RWPE1 (cell line): ENCODE measurements at regions of chr6 and their contacts with region 1.

Region 1: GRCh38 chr6:26103770-26104456 is 16.7 kb downstream of the HFE start:
- DNase-seq: peak; percentile 80
- H3K27ac ChIP-seq: peak overlapping the region; percentile 89
- CTCF ChIP-seq: 0 out of 2 replicates have a peak, but pooled peaks have one; percentile 24

Region 2: GRCh38 chr6:26031595-26032339 is 72.1 kb before region 1 on chr6:
- CTCF ChIA-PET with region 1: no interaction called
- POLR2A ChIA-PET with region 1: interaction called, 10 read pairs
- DNase-seq: peak; percentile 96
- H3K27ac ChIP-seq: peak overlapping the region; percentile 99
- CTCF ChIP-seq: no peak

Region 3: DNA sequence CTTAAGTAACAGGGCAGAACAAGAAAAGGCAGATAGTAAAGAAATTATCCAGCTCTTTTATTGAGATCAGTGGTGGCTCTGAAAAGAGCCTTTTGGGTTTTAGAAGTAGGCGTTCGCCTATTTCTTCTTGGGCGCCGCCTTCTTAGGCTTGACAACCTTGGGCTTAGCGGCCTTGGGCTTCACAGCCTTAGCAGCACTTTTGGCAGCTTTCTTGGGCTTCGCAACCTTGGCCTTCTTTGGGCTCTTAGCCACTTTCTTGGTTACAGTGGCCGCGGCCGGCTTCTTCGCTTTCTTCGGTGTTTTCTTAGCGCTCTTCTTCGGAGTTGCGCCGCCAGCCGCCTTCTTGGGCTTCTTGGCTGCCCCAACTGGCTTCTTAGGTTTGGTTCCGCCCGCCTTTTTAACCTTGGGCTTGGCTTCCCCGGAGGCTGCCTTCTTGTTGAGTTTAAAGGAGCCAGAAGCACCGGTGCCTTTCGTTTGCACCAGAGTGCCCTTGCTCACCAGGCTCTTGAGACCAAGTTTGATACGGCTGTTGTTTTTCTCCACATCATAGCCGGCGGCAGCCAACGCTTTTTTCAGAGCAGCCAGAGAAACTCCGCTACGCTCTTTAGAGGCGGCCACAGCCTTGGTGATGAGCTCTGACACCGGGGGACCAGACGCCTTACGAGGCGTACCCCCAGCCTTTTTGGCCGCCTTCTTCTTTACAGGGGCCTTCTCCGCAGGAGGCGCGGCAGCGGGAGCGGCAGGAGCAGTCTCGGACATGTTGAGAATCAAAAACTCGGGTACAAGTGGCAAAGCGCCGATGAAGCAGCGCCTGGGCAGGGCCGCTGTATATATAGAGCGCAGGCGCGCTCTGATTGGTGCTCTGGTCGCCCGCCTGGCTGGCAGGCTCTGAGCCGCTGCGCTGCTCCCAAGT is 48.0 kb before region 1 on chr6:
- CTCF ChIA-PET with region 1: no interaction called
- POLR2A ChIA-PET with region 1: interaction called, 17 read pairs
- DNase-seq: peak; percentile 93
- H3K27ac ChIP-seq: peak overlapping the region; percentile 99
- CTCF ChIP-seq: no peak

Region 4: DNA sequence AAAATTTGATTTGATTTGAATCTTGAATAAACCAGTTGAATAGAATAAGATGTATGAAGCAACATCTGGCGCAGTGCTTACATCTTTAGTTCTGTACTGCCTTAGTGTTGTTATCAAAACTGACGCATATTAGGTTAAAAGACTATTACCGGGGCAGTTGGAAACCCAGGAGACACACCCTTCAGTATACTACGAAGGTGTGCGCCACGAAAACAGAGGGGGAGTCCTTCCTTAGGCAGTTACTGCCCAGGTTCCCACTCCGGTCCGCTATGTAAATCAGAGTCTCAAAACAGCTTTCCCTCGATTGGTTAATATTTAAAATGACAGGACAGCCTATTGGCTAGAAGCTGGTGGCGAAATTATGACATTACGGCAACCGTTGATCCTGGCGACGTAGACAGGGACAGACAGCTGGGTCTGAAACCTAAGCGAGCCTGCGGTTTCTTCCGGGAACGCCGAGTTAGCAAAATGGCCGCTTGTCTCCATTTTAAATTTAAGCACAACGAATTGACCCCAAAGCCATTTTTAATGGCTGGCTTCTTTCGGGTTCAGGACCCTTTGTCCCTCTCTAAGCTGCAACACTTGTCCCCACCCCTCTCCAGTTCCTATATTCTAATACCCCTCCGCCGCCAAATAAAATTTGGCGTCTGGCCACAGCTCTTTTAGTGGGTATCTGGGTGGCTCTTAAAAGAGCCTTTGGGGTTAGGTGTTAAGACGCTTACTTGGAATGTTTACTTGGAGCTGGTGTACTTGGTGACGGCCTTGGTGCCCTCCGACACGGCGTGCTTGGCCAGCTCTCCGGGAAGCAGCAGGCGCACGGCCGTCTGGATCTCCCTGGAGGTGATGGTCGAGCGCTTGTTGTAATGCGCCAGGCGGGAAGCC is 19.1 kb after region 1 on chr6:
- CTCF ChIA-PET with region 1: interaction called, 6 read pairs
- POLR2A ChIA-PET with region 1: interaction called, 22 read pairs
- DNase-seq: peak; percentile 91
- H3K27ac ChIP-seq: peak overlapping the region; percentile 99
- CTCF ChIP-seq: no peak